ENCODE measurements at regions of chr4 and their contacts with region 1.

Region 1: GRCh38 chr4:173301518-173302201 is 32.5 kb downstream of the HMGB2 start:
- H3K4me3 ChIP-seq: no peak overlapping the region
- H3K27ac ChIP-seq: no peak overlapping the region
- H3K4me1 ChIP-seq: no peaks in the 10 kb centered on the region
- CTCF ChIP-seq: no peak

Region 2: DNA sequence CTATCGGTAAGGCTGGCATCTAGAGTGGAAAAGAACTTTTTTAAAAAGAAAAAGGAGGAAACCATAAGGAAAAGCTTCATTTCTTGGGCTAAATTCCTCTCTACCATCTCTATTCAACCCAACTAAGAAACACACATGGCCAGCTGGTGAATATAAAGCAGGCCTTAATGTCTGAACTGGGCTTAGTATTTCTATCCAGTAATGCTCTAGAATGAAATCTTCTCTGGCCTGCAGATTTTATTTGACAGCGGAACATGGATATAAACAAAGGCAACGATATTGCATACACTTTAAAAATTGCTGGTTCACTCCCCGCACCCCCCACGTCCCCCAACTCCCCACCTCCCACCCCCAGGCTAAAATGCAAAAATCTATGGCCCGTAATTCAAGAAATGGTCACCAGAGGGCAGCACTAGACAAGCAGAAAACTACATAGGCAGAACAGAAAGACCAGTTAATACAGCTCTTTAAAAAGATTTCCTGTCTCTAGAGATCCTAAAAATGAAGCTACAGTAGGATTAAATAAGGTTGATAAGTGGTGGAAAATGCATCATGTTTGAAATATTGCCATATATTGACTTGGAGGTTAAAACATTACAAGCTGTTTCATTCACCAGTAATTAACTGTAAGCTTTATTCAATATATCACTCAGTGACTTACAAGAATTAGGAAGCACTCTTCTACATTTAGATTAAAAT is 288.3 kb before region 1 on chr4:
- CTCF ChIA-PET with region 1: interaction called, 25 read pairs
- POLR2A ChIA-PET with region 1: no interaction called
- H3K4me3 ChIP-seq: no peak overlapping the region
- H3K27ac ChIP-seq: no peak overlapping the region
- H3K4me1 ChIP-seq: no peaks in the 10 kb centered on the region
- CTCF ChIP-seq: no peak

Region 3: DNA sequence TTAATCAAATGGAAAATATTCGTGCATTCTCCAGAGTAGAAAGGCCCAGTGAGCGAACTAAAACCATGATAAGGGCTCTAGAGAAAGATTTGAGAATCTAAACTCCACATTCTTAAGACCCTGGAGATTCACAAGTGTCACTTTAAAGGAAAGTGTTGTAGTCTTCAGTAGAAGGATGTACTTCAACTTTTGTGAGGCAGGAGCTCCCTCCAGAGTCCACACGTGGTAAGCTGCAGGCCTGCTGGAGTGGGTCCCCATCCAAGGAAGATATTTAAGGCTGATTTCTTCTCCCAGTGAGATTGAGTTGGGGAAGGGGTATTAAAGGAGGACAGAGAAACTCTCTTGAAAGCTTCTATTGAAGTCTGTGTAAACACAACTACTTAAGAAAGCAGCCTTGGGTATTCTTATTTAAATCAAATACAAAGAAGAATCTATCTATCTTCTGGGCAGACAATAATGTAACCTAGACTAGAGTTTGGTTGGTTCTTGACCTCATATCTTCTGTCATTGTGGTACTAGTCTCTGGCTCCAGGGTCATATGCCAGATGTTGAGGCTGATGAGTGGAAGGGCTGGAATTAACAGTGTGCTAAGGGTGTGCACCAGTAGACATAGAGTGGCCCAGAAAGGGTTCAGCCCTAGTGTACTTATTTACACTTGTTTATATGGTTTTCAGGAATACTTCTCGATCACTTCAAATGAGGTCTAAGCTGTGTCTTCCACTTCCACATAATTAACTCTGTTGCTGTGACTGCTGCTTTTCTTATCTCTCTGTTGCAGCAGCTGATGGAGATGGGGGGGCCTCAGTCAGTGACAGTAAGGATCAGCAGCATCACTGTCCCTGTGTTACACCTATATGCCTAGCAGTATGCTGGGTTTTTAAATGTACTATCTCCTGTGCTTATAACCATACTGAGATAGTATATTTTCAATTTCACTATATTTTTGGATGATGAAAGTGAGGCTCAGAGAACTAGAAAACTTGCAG is 43.6 kb before region 1 on chr4:
- CTCF ChIA-PET with region 1: interaction called, 11 read pairs
- POLR2A ChIA-PET with region 1: no interaction called
- H3K4me3 ChIP-seq: no peak overlapping the region
- H3K27ac ChIP-seq: no peak overlapping the region
- H3K4me1 ChIP-seq: no peaks in the 10 kb centered on the region; the same call in 1 of the 2 replicates
- CTCF ChIP-seq: no peak

Region 4: GRCh38 chr4:173277340-173277739 is 24.3 kb before region 1 on chr4:
- CTCF ChIA-PET with region 1: interaction called, 18 read pairs
- POLR2A ChIA-PET with region 1: no interaction called
- H3K4me3 ChIP-seq: no peak overlapping the region
- H3K27ac ChIP-seq: no peak overlapping the region
- H3K4me1 ChIP-seq: 0 out of 2 replicates have a peak, but pooled peaks cover 3% of the 10 kb centered on the region
- CTCF ChIP-seq: no peak

Region 5: GRCh38 chr4:173318648-173319211 is 17.1 kb after region 1 on chr4:
- CTCF ChIA-PET with region 1: interaction called, 13 read pairs
- POLR2A ChIA-PET with region 1: no interaction called
- H3K4me3 ChIP-seq: no peak overlapping the region
- H3K27ac ChIP-seq: no peak overlapping the region
- H3K4me1 ChIP-seq: no peaks in the 10 kb centered on the region
- CTCF ChIP-seq: no peak

Region 6: DNA sequence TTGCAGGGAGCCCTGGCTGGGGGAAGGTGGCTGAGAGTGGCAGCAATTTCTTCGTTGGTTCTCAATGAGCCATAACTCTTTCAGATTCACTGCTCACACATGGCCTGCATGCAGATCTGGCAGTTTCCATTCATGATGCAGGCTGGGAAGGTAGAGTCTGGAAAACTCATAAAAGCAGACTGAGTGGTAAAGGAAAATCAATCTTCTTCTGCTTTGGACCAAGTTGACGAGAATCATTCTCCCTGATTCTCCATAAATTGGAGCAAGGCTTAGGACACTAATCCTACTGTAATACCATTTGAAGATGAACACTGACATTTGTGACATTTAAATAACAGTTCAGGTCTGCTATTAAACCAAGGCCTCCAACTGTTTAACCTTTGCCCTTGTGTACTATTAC is 263.6 kb after region 1 on chr4:
- CTCF ChIA-PET with region 1: no interaction called
- POLR2A ChIA-PET with region 1: no interaction called
- H3K4me3 ChIP-seq: no peak overlapping the region
- H3K27ac ChIP-seq: no peak overlapping the region
- H3K4me1 ChIP-seq: 0 out of 2 replicates have a peak, but pooled peaks cover 3% of the 10 kb centered on the region
- CTCF ChIP-seq: no peak

Region 7: GRCh38 chr4:173714456-173714855 is 412.8 kb after region 1 on chr4:
- CTCF ChIA-PET with region 1: no interaction called
- POLR2A ChIA-PET with region 1: no interaction called
- H3K4me3 ChIP-seq: no peak overlapping the region
- H3K27ac ChIP-seq: no peak overlapping the region
- H3K4me1 ChIP-seq: no peaks in the 10 kb centered on the region
- CTCF ChIP-seq: no peak

Region 8: DNA sequence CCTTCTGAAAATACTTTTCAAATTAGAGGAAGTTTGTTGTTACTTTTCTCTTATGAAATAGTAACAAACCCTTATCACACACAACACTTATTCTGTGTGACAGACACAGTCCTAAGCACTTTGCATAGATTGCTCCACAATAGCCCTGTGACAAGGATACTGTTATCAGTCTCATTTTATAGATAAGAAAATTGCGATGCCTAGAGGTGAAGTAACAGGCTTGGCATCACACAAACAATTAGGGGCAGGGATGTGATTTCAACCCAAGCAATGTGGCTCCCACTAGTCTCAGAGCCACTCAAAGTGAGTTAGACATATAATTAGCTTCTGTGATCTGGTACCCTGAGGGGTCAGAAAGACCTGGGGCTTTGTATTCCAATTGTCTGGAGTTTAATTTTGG is 641.9 kb after region 1 on chr4:
- CTCF ChIA-PET with region 1: no interaction called
- POLR2A ChIA-PET with region 1: no interaction called
- H3K4me3 ChIP-seq: no peak overlapping the region
- H3K27ac ChIP-seq: no peak overlapping the region
- H3K4me1 ChIP-seq: no peaks in the 10 kb centered on the region
- CTCF ChIP-seq: no peak

Measured in HEK293 (cell line).